B cell (primary cell): ENCODE measurements at regions of chr11 and their contacts with region 1.

Region 1: GRCh38 chr11:128172046-128172878 is 415.1 kb downstream of the ETS1 start:
- DNase-seq: peak; percentile 86
- ATAC-seq: peak; percentile 70
- H3K4me3 ChIP-seq: no peak overlapping the region
- H3K4me3 Mint-ChIP-seq: no peak overlapping the region
- H3K27ac ChIP-seq: no peak overlapping the region
- H3K27ac Mint-ChIP-seq: no peak overlapping the region
- H3K4me1 ChIP-seq: peaks cover 3 to 4% of the 10 kb centered on the region in 2 donors
- H3K4me1 Mint-ChIP-seq: peaks cover 3% of the 10 kb centered on the region
- H3K27me3 ChIP-seq: peaks cover 0 to 4% (median 0%) of the 10 kb centered on the region in 4 experiments
- H3K27me3 Mint-ChIP-seq: peaks cover 10% of the 10 kb centered on the region
- CTCF ChIP-seq: peak; percentile 89

Region 2: DNA sequence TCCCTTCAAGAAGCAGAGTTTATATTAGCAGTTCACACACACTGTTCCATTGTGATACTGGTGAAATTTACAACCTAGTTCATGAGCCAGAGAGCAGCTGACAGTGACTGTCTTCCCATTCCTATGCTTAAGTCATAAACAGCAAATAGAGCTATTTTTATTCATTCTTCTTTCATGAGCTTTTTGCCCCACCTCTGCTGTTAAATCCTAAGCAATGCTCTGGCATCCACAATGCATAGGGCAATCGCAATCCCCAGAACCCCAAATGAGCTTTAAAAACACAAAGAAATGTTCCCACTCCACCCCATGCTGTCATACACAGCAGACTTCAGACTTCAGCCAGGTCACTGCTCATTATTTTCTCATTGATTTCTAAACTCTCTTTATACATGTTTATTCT is 107.6 kb after region 1 on chr11:
- CTCF ChIA-PET with region 1: interaction called, 11 read pairs
- POLR2A ChIA-PET with region 1: interaction called, 4 read pairs
- intact Hi-C with region 1: no loop called
- DNase-seq: no peak
- ATAC-seq: no peak
- H3K4me3 ChIP-seq: no peak overlapping the region
- H3K4me3 Mint-ChIP-seq: no peak overlapping the region
- H3K27ac ChIP-seq: no peak overlapping the region
- H3K27ac Mint-ChIP-seq: no peak overlapping the region
- H3K4me1 ChIP-seq: peaks cover 7 to 13% of the 10 kb centered on the region in 2 donors
- H3K4me1 Mint-ChIP-seq: peaks cover 17% of the 10 kb centered on the region
- H3K27me3 ChIP-seq: no peaks in the 10 kb centered on the region
- H3K27me3 Mint-ChIP-seq: no peaks in the 10 kb centered on the region
- CTCF ChIP-seq: no peak

Region 3: DNA sequence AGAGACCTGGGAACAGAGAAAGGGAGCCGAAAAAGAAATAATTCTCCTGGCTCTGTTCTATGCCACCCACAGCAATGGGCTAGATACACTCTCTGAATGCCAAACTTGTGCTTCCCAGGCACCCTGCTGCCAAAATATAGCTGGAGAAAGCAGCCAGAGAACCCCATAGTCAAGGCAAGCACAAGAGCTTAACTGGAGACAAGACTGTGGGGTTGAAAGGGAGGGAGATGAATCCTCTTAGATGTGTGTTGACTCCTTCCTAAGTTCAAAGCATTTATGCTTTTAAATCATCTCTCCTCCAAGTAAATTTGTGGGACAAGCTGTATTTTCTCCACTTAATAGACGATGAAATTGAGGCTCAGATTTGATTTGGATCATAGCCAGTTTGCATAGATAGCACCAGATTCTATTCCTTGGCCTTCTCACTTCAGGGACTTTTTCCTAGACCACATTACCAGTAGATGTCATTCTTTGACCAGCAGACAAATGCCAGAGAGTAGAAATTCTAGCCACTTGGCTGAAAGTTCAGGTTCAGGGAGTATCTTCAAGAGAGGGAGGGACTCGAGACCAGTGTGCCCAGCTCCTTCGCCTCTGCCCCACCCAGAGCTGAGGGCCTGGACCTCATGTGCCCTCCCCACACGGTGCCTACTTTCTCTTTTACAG is 431.6 kb after region 1 on chr11:
- CTCF ChIA-PET with region 1: interaction called, 14 read pairs
- POLR2A ChIA-PET with region 1: interaction called, 3 read pairs
- intact Hi-C with region 1: no loop called
- DNase-seq: peak; percentile 63
- ATAC-seq: peak; percentile 69
- H3K4me3 ChIP-seq: no peak overlapping the region
- H3K4me3 Mint-ChIP-seq: peak overlapping the region; percentile 35
- H3K27ac ChIP-seq: peak overlapping the region in 1 of 2 donors; percentile 10
- H3K27ac Mint-ChIP-seq: peak overlapping the region; percentile 72
- H3K4me1 ChIP-seq: peaks cover 55 to 59% of the 10 kb centered on the region in 2 donors
- H3K4me1 Mint-ChIP-seq: peaks cover 72% of the 10 kb centered on the region
- H3K27me3 ChIP-seq: no peaks in the 10 kb centered on the region
- H3K27me3 Mint-ChIP-seq: no peaks in the 10 kb centered on the region
- CTCF ChIP-seq: no peak

Region 4: DNA sequence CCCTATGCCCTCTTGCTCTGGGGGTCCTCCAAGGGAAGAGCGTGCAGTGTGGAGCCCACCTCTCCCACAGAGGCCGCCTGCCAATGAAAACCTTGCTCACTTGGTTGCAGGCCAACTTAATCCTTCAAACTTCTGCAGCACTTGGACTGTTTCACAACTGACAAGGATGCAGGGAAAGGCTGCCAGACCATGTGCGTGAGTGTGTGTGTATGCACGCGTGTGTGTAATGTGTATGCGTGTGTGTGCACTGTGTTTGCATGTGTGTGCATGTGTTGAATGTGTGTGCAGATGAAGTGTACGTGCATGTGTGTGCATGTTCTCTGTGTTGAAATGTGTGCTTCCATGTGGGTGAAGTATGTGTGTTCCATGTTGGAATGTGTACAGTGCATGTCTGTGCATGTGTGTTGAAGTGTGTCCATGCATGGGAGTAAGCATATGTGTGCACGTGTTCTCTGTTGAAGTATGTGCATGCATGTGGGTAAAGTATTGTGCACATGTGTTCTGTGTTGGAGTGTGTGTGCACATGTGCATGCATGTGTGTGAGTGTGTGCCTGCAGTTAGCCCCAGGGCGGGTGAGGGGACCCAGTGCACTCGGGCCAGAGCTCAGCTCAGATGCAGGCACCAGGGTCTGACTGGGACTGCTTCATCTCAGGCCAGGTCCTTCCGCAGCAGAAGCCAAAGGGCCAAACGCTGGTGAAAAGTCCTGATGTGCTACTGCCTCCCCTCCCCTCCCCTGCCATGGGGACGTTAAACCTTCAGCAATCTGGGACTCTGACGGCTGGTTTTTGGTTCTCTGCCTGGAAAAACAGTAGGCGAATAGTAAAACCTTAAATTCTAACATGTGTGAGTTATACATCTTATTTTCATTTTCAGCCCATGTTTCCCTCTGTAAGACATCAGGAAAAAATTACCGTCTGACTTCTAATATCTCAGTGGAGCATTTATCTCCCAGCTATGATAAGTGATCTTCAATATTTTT is 593.6 kb after region 1 on chr11:
- CTCF ChIA-PET with region 1: interaction called, 11 read pairs
- POLR2A ChIA-PET with region 1: no interaction called
- intact Hi-C with region 1: no loop called
- DNase-seq: no peak
- ATAC-seq: no peak
- H3K4me3 ChIP-seq: no peak overlapping the region
- H3K4me3 Mint-ChIP-seq: no peak overlapping the region
- H3K27ac ChIP-seq: no peak overlapping the region
- H3K27ac Mint-ChIP-seq: no peak overlapping the region
- H3K4me1 ChIP-seq: peaks cover 0 to 3% of the 10 kb centered on the region in 2 donors
- H3K4me1 Mint-ChIP-seq: peaks cover 17% of the 10 kb centered on the region
- H3K27me3 ChIP-seq: no peaks in the 10 kb centered on the region
- H3K27me3 Mint-ChIP-seq: no peaks in the 10 kb centered on the region
- CTCF ChIP-seq: no peak

Region 5: GRCh38 chr11:128859563-128860441 is 687.5 kb after region 1 on chr11:
- CTCF ChIA-PET with region 1: interaction called, 54 read pairs
- POLR2A ChIA-PET with region 1: no interaction called
- intact Hi-C with region 1: loop called (anchors 1 kb)
- DNase-seq: peak; percentile 87
- ATAC-seq: peak; percentile 99
- H3K4me3 ChIP-seq: no peak overlapping the region
- H3K4me3 Mint-ChIP-seq: no peak overlapping the region
- H3K27ac ChIP-seq: no peak overlapping the region
- H3K27ac Mint-ChIP-seq: peak overlapping the region; percentile 59
- H3K4me1 ChIP-seq: peaks cover 9 to 17% of the 10 kb centered on the region in 2 donors
- H3K4me1 Mint-ChIP-seq: peaks cover 21% of the 10 kb centered on the region
- H3K27me3 ChIP-seq: no peaks in the 10 kb centered on the region
- H3K27me3 Mint-ChIP-seq: peaks cover 3% of the 10 kb centered on the region
- CTCF ChIP-seq: peak; percentile 100

Region 6: GRCh38 chr11:128956401-128957201 is 784.3 kb after region 1 on chr11:
- CTCF ChIA-PET with region 1: interaction called, 93 read pairs
- POLR2A ChIA-PET with region 1: no interaction called
- intact Hi-C with region 1: loop called (anchors 1 kb)
- DNase-seq: peak; percentile 73
- ATAC-seq: no peak
- H3K4me3 ChIP-seq: no peak overlapping the region
- H3K4me3 Mint-ChIP-seq: no peak overlapping the region
- H3K27ac ChIP-seq: no peak overlapping the region
- H3K27ac Mint-ChIP-seq: no peak overlapping the region
- H3K4me1 ChIP-seq: peaks cover 0 to 4% of the 10 kb centered on the region in 2 donors
- H3K4me1 Mint-ChIP-seq: peaks cover 2% of the 10 kb centered on the region
- H3K27me3 ChIP-seq: peaks cover 0 to 13% (median 1%) of the 10 kb centered on the region in 4 experiments
- H3K27me3 Mint-ChIP-seq: peaks cover 30% of the 10 kb centered on the region
- CTCF ChIP-seq: peak; percentile 86